ENCODE measurements at regions of chr9 and their contacts with region 1.

Region 1: DNA sequence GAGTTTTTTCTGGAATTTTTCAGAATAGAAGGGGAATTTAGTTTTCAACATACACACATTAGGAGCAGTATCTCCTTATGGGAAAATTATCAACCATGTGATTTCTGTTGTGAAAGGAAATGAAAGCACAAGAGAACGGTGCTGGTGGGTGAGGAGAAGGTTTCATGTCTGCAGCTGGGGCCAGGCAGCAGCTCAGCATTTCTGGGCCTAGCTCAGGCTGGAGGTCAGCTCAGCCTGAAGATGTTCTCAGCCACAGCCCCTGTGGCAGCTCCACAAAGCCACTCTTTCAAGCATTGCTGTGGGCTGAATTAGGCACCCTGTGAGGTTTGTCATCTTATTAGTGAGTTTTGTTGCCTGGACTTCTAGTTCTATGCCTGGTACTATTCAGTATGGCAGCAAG is 90.3 kb downstream of the DIRAS2 start:
- DNase-seq: no peak
- H3K4me3 ChIP-seq: no peak overlapping the region
- H3K27ac ChIP-seq: no peak overlapping the region
- H3K4me1 ChIP-seq: no peaks in the 10 kb centered on the region
- H3K27me3 ChIP-seq: no peaks in the 10 kb centered on the region
- CTCF ChIP-seq: no peak

Region 2: GRCh38 chr9:90600029-90600428 is 47.7 kb after region 1 on chr9:
- CTCF ChIA-PET with region 1: no interaction called
- dilution Hi-C with region 1: no loop called
- in situ Hi-C with region 1: no loop called
- intact Hi-C with region 1: loop called (anchors 1 kb)
- DNase-seq: peak; percentile 40
- H3K4me3 ChIP-seq: no peak overlapping the region
- H3K27ac ChIP-seq: no peak overlapping the region
- H3K4me1 ChIP-seq: peaks cover 3% of the 10 kb centered on the region
- H3K27me3 ChIP-seq: no peaks in the 10 kb centered on the region
- CTCF ChIP-seq: peak; percentile 15 to 47

Measured in mammary epithelial cell (primary cell).